Esophagus muscularis mucosa (tissue), 4 donors: ENCODE measurements at regions of chr1 and their contacts with region 1.

Region 1: GRCh38 chr1:209207701-209208286 is 375.7 kb upstream of the CAMK1G start:
- DNase-seq: no peak
- H3K4me3 ChIP-seq: peak overlapping the region; percentile 33 to 41 (median 34)
- H3K27ac ChIP-seq: no peak overlapping the region
- H3K4me1 ChIP-seq: peaks cover 11 to 15% (median 13%) of the 10 kb centered on the region in 4 donors
- H3K27me3 ChIP-seq: peaks cover 0 to 46% (median 9%) of the 10 kb centered on the region in 4 donors
- CTCF ChIP-seq: peak; percentile 35 to 70 (median 54)
- EP300 ChIP-seq: no peak
- POLR2A ChIP-seq: no peak

Region 2: DNA sequence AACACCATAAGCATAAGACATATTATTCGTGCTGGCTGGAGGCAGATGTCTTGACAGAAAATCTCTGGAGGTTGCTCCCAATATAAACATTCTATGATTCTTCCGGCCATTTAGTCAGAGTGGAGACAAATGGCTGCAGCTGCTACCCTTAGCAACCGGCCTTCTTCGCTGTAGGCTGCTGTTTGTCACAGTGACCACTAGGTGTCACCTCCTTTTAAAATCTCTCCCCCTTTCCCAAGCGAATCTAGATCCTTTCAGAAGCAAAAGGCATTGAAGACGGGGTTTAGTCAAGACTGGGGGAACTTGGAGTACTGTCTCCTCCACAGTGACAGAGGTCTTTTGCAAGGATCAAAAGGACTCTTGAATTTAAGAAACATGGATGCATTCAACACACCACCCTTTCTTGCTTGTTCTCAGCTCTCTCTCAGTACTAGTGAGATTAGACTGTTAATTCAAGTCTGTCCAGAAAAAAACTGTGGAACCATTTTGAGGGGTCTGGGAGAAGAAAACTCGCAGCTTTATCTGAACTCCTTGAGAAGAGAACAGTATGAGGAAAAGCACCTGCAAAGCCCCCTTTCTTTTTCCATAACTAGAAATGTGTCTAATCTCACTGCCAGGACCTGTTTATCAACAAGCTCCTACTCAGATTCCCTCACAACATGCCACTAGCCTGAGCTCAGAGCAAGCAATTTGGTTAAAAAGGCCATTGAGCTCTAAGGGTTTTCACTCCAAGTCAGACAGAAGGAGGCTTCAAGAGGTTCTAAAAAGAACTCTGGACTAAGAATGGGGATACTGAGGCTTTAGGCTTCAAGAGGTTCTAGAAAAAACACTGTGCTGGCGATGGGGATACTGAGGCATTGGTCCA is 555.3 kb before region 1 on chr1:
- intact Hi-C with region 1: loop called (anchors 5 kb)
- DNase-seq: no peak
- H3K4me3 ChIP-seq: no peak overlapping the region
- H3K27ac ChIP-seq: no peak overlapping the region
- H3K4me1 ChIP-seq: no peaks in the 10 kb centered on the region
- H3K27me3 ChIP-seq: peaks cover 0 to 44% (median 0%) of the 10 kb centered on the region in 4 donors
- CTCF ChIP-seq: peak; percentile 66 to 83 (median 79)
- EP300 ChIP-seq: no peak
- POLR2A ChIP-seq: no peak

Region 3: GRCh38 chr1:209076688-209077087 is 131.1 kb before region 1 on chr1:
- intact Hi-C with region 1: no loop called
- DNase-seq: no peak
- H3K4me3 ChIP-seq: no peak overlapping the region
- H3K27ac ChIP-seq: no peak overlapping the region
- H3K4me1 ChIP-seq: no peaks in the 10 kb centered on the region
- H3K27me3 ChIP-seq: no peaks in the 10 kb centered on the region
- CTCF ChIP-seq: no peak
- EP300 ChIP-seq: no peak
- POLR2A ChIP-seq: no peak

Region 4: DNA sequence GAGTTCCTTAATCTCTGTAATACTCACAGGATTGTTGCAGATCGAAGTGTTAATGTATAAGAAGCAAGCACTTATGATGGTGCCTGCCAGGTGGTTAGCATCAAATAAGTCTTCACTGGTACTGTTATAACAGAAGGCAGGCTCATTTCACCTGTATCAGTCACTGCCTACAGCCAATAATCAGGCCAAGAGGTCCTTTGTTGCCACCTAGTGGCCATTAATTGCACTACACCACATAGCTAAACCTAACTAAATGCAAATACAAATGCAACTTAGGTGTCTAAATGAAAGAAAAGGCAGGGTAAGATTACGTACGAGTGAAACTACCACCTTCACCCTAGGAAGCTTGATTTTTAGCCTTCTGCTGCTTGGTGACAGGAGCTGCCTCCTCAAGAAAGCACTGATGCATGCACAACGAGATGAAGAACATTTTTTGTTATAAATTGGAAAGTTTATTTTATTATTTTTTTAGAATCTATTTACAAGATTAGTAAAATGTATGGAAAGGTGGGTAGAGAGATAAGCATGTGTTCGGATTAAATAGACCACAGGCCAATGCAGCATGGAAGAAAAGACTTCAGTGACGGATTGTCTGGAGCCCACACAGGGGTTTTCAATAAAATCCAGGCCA is 41.0 kb after region 1 on chr1:
- intact Hi-C with region 1: loop called (anchors 2 kb)
- DNase-seq: peak; percentile 89
- H3K4me3 ChIP-seq: no peak overlapping the region
- H3K27ac ChIP-seq: no peak overlapping the region
- H3K4me1 ChIP-seq: no peaks in the 10 kb centered on the region
- H3K27me3 ChIP-seq: no peaks in the 10 kb centered on the region
- CTCF ChIP-seq: peak; percentile 65 to 92 (median 77)
- EP300 ChIP-seq: no peak
- POLR2A ChIP-seq: no peak

Region 5: GRCh38 chr1:209565759-209566678 is 358.2 kb after region 1 on chr1:
- intact Hi-C with region 1: loop called (anchors 10 kb)
- DNase-seq: peak; percentile 94
- H3K4me3 ChIP-seq: no peak overlapping the region
- H3K27ac ChIP-seq: no peak overlapping the region
- H3K4me1 ChIP-seq: peaks cover 0 to 12% (median 0%) of the 10 kb centered on the region in 4 donors
- H3K27me3 ChIP-seq: peaks cover 0 to 47% (median 0%) of the 10 kb centered on the region in 4 donors
- CTCF ChIP-seq: peak; percentile 48 to 67 (median 50)
- EP300 ChIP-seq: no peak
- POLR2A ChIP-seq: no peak